ENCODE measurements at regions of chr1 and their contacts with region 1.

Region 1: GRCh38 chr1:225777583-225778336 is at the start of gene SRP9:
- DNase-seq: peak; percentile 99

Region 2: GRCh38 chr1:225474986-225475820 is 302.6 kb before region 1 on chr1:
- CTCF ChIA-PET with region 1: interaction called, 25 read pairs
- POLR2A ChIA-PET with region 1: interaction called, 25 read pairs
- DNase-seq: peak; percentile 94

Region 3: GRCh38 chr1:225578251-225578950 is 199.4 kb before region 1 on chr1:
- CTCF ChIA-PET with region 1: interaction called, 5 read pairs
- POLR2A ChIA-PET with region 1: interaction called, 11 read pairs
- DNase-seq: no peak

Region 4: DNA sequence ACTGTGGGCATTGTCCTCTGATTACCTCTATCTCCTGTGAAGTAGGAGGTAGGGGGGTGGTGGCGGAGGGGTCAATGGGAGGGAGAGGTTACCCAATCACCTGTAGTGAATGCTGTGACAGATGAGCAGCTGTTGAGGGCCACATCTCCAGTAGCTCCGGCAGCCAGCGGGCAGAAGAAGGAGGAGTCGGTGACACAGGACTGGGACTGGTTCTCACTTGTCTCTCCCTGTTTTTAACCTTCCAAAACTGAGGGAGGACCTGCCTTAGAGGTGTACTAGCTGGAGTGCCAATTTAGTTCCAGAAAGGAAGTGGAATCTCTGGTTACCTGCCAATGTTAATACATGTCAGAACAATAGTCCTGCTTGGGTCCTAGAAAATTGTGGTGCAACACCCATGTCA is 68.7 kb before region 1 on chr1:
- CTCF ChIA-PET with region 1: interaction called, 5 read pairs
- POLR2A ChIA-PET with region 1: interaction called, 10 read pairs
- DNase-seq: no peak

Region 5: DNA sequence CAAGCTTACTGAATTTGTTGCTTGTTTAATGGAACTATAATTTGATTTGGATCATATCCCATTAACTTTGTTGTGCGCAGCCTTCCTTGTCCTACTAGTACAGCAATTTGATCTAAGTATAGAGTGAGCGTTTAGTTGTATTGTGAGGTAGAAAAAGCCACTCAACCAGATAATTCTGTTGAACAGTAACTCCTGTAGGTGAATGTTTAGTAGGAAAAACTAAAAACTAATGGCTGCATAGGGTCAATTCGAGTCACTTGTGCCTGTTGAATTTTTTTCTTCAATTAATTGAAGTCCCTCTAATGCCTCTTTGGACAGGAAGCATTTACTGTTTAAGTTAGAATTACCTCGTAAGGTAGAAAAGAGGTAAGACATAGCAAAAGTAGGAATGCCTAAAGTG is 17.2 kb after region 1 on chr1:
- CTCF ChIA-PET with region 1: interaction called, 6 read pairs
- POLR2A ChIA-PET with region 1: interaction called, 10 read pairs
- DNase-seq: no peak

Region 6: GRCh38 chr1:225817611-225818061 is 39.9 kb after region 1 on chr1:
- CTCF ChIA-PET with region 1: no interaction called
- POLR2A ChIA-PET with region 1: interaction called, 20 read pairs
- DNase-seq: no peak

Region 7: DNA sequence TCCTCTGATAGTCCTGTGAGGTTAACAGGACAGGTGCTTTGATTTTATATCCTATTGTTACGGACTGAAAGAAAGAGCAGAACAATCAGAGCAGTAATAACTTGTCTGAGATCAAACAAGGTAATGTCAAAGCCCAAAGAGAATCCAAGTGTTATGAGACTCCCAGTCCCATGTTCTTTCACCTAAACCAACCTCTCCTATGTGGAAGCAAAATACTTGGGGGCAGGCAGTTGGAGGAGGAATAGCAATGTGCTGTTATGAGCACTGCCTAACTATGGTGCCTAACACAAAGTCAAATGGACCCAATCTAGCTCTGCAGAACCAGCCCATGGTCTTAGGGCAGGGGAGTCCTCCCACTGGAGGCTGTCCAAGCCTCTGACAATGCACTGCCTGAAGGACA is 380.7 kb after region 1 on chr1:
- CTCF ChIA-PET with region 1: no interaction called
- POLR2A ChIA-PET with region 1: no interaction called
- DNase-seq: no peak